ENCODE measurements at regions of chr11 and their contacts with region 1.

Region 1: GRCh38 chr11:8006349-8006977 is 19.3 kb downstream of the EIF3F start:
- DNase-seq: no peak
- H3K4me3 ChIP-seq: no peak overlapping the region
- H3K27me3 ChIP-seq: no peaks in the 10 kb centered on the region
- CTCF ChIP-seq: peak; percentile 93

Region 2: DNA sequence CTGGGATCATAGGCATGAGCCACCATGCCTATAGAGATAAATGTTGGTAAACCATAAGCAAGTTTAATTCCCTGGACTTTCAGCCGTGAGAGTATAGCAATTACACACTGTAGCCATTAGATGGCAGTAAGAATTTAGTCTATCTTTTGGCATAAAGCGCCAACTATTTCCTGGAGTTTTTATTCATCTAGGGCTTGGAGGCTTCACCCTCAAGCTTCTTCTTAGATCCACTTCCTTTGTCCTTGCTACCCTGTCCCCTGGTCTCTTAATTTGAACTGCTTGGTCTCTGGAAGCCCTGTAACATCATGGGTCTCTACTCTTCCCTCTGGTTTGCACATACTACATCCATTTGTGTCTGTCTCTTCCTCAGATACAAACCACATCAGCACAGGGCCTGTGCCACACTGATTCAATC is 113.6 kb before region 1 on chr11:
- CTCF ChIA-PET with region 1: interaction called, 16 read pairs
- POLR2A ChIA-PET with region 1: no interaction called
- DNase-seq: no peak
- H3K4me3 ChIP-seq: no peak overlapping the region
- H3K27me3 ChIP-seq: no peaks in the 10 kb centered on the region
- CTCF ChIP-seq: peak; percentile 65

Region 3: GRCh38 chr11:7994581-7995278 is 11.7 kb before region 1 on chr11:
- CTCF ChIA-PET with region 1: interaction called, 19 read pairs
- POLR2A ChIA-PET with region 1: no interaction called
- DNase-seq: no peak
- H3K4me3 ChIP-seq: no peak overlapping the region
- H3K27me3 ChIP-seq: no peaks in the 10 kb centered on the region
- CTCF ChIP-seq: no peak

Region 4: GRCh38 chr11:8033305-8034105 is 27.0 kb after region 1 on chr11:
- CTCF ChIA-PET with region 1: interaction called, 24 read pairs
- POLR2A ChIA-PET with region 1: no interaction called
- DNase-seq: no peak
- H3K4me3 ChIP-seq: no peak overlapping the region
- H3K27me3 ChIP-seq: no peaks in the 10 kb centered on the region
- CTCF ChIP-seq: peak; percentile 93

Region 5: GRCh38 chr11:8099291-8099899 is 92.9 kb after region 1 on chr11:
- CTCF ChIA-PET with region 1: interaction called, 710 read pairs
- POLR2A ChIA-PET with region 1: interaction called, 6 read pairs
- DNase-seq: peak; percentile 26
- H3K4me3 ChIP-seq: no peak overlapping the region
- H3K27me3 ChIP-seq: no peaks in the 10 kb centered on the region
- CTCF ChIP-seq: peak; percentile 82

Region 6: GRCh38 chr11:8126649-8127289 is 120.3 kb after region 1 on chr11:
- CTCF ChIA-PET with region 1: no interaction called
- POLR2A ChIA-PET with region 1: interaction called, 14 read pairs
- DNase-seq: no peak
- H3K4me3 ChIP-seq: no peak overlapping the region
- H3K27me3 ChIP-seq: no peaks in the 10 kb centered on the region; the same call in 1 of the 2 replicates
- CTCF ChIP-seq: no peak